Naive thymus-derived CD4-positive, alpha-beta T cell (primary cell): ENCODE measurements at regions of chr1 and their contacts with region 1.

Region 1: DNA sequence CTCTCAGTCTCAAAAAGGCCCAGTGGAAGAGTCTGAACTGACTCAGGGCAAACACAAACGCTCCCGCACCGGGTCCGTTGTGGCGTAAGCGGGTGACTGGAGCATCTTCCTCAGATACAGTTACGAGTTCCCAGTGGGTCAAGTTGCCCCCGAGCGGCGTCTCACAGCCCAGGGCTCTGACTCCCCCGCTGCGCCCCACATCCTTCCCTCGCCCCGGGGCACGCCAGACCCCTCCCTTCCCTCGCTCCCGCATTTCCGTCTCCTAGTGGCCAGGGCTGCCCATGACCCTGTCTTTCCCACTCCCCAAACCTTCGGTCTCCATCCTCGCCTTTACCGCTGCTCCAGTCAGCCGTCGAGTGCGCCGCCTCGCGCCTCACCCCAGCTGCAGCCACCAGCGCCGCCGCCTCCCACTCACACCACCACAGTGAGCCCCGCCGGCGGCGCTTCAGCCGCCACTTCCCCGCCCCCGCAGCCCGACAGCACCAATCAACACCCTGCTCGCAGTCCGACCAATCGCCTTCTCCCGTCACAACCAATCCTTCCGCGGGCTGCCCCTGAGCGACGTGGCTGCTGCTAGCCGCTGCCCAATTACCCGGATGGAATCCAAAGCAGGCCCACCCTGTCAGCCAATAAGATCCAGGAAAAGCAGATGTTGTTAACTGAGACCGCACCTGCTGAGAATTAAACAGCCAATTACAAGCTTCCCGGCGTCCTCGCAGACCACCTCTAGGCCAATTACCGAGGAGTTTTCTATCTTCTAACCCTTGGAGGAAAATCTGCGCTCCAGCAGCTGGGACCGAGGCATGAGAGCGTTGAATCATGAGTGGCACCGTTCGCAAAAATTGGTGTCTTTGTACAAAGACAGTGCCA is at the start of gene TDRKH:
- DNase-seq: peak; percentile 93 to 99 (median 99)
- ATAC-seq: peak; percentile 97
- H3K4me3 ChIP-seq: peak within 1 kb of the TSS; percentile 88
- H3K4me3 Mint-ChIP-seq: peak within 1 kb of the TSS; percentile 91 to 99 (median 97)
- H3K27ac ChIP-seq: peak within 1 kb of the TSS; percentile 60
- H3K27ac Mint-ChIP-seq: peak within 1 kb of the TSS; percentile 75 to 93 (median 89)
- H3K4me1 ChIP-seq: peaks cover 0 to 14% of the 10 kb centered on the region in 2 donors
- H3K4me1 Mint-ChIP-seq: peaks cover 6 to 38% (median 30%) of the 10 kb centered on the region in 7 donors
- H3K27me3 ChIP-seq: no peaks in the 10 kb centered on the region
- H3K27me3 Mint-ChIP-seq: peaks cover 0 to 2% (median 0%) of the 10 kb centered on the region in 5 donors
- total RNA-seq, gene TDRKH: 7.7 to 23.1 (median 17.0) TPM

Region 2: GRCh38 chr1:151459331-151460046 is 330.8 kb before region 1 on chr1 and contains the start of gene POGZ:
- CTCF ChIA-PET with region 1: interaction called, 3 read pairs
- POLR2A ChIA-PET with region 1: no interaction called
- intact Hi-C with region 1: loop called in 1 of 2 experiments (anchors 1 kb)
- DNase-seq: peak; percentile 80 to 94 (median 93)
- ATAC-seq: peak; percentile 87
- H3K4me3 ChIP-seq: peak within 1 kb of the TSS; percentile 73
- H3K4me3 Mint-ChIP-seq: peak within 1 kb of the TSS; percentile 87 to 100 (median 91)
- H3K27ac ChIP-seq: peak within 1 kb of the TSS; percentile 81
- H3K27ac Mint-ChIP-seq: peak within 1 kb of the TSS; percentile 91 to 97 (median 96)
- H3K4me1 ChIP-seq: peaks cover 8 to 12% of the 10 kb centered on the region in 2 donors
- H3K4me1 Mint-ChIP-seq: peaks cover 15 to 43% (median 34%) of the 10 kb centered on the region in 7 donors
- H3K27me3 ChIP-seq: no peaks in the 10 kb centered on the region
- H3K27me3 Mint-ChIP-seq: peaks cover 15 to 25% (median 18%) of the 10 kb centered on the region in 5 donors
- total RNA-seq, gene POGZ: 83.7 to 143 (median 112) TPM

Region 3: DNA sequence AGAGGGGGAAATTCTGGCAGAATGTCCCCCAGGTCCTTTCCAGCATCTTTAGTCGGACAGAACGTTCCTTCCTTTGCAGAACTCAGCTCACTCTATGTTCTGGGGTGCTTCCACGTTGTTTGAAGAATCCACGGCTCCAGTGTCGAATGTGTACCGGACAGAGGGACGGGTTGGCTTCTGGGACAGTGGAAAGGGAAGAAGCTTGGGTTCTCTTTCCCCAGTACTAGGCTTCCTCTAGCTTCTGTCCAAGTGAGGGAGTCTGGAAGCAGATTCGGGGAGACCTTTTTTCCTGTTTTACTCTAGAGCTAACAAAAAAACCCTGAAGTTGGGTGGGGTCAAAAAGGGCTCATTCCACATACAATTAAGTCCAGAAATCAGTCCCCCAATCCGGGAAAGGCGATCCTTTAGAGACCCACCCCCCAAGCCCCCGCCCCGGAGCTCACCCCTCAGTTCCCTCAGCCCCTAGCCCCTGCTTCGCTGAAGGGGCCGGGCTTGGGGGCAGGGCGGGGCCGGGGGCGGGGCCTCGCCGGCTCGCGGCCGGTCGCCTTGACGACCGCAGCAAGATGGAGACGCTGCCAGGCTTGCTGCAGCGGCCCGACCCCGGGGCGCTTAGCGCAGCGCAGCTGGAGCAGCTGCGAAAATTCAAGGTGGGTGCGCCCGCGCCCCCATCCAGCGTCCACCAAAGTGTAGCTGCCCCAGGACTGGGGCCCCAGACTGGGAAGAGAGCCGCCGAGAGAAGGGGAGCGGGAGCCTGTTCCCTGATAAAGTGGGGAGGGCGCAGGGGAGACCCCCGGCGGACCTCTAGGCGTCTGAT is 69.1 kb before region 1 on chr1 and contains the start of gene RIIAD1:
- CTCF ChIA-PET with region 1: no interaction called
- POLR2A ChIA-PET with region 1: no interaction called
- intact Hi-C with region 1: loop called (anchors 1 to 5 kb)
- DNase-seq: peak in 8 of 9 donors; percentile 17 to 47 (median 40)
- ATAC-seq: peak; percentile 85
- H3K4me3 ChIP-seq: peak within 1 kb of the TSS; percentile 71
- H3K4me3 Mint-ChIP-seq: peak within 1 kb of the TSS; percentile 71 to 85 (median 83)
- H3K27ac ChIP-seq: no peak within 1 kb of the TSS
- H3K27ac Mint-ChIP-seq: peak within 1 kb of the TSS in 8 of 9 donors; percentile 11 to 85 (median 36)
- H3K4me1 ChIP-seq: peaks cover 9 to 14% of the 10 kb centered on the region in 2 donors
- H3K4me1 Mint-ChIP-seq: peaks cover 17 to 41% (median 26%) of the 10 kb centered on the region in 7 donors
- H3K27me3 ChIP-seq: peaks cover 4 to 6% of the 10 kb centered on the region in 2 donors
- H3K27me3 Mint-ChIP-seq: peaks cover 54 to 88% (median 65%) of the 10 kb centered on the region in 5 donors
- total RNA-seq, gene RIIAD1: not detected

Region 4: GRCh38 chr1:151828965-151829698 is 38.8 kb after region 1 on chr1:
- CTCF ChIA-PET with region 1: interaction called, 7 read pairs
- POLR2A ChIA-PET with region 1: interaction called, 3 read pairs
- intact Hi-C with region 1: loop called in 1 of 2 experiments (anchors 2 kb)
- DNase-seq: no peak
- ATAC-seq: no peak
- H3K4me3 ChIP-seq: no peak overlapping the region
- H3K4me3 Mint-ChIP-seq: peak overlapping the region; percentile 39 to 80 (median 72)
- H3K27ac ChIP-seq: peak overlapping the region; percentile 16
- H3K27ac Mint-ChIP-seq: peak overlapping the region; percentile 3 to 91 (median 80)
- H3K4me1 ChIP-seq: peaks cover 49 to 60% of the 10 kb centered on the region in 2 donors
- H3K4me1 Mint-ChIP-seq: peaks cover 41 to 81% (median 59%) of the 10 kb centered on the region in 7 donors
- H3K27me3 ChIP-seq: no peaks in the 10 kb centered on the region
- H3K27me3 Mint-ChIP-seq: no peaks in the 10 kb centered on the region

Region 5: GRCh38 chr1:151898513-151898991 is 108.2 kb after region 1 on chr1:
- CTCF ChIA-PET with region 1: no interaction called
- POLR2A ChIA-PET with region 1: no interaction called
- intact Hi-C with region 1: loop called in 1 of 2 experiments (anchors 2 kb)
- DNase-seq: peak; percentile 16 to 88 (median 83)
- ATAC-seq: peak; percentile 89
- H3K4me3 ChIP-seq: peak overlapping the region; percentile 61
- H3K4me3 Mint-ChIP-seq: peak overlapping the region; percentile 76 to 91 (median 84)
- H3K27ac ChIP-seq: peak overlapping the region; percentile 66
- H3K27ac Mint-ChIP-seq: peak overlapping the region; percentile 85 to 100 (median 97)
- H3K4me1 ChIP-seq: peaks cover 29 to 52% of the 10 kb centered on the region in 2 donors
- H3K4me1 Mint-ChIP-seq: peaks cover 53 to 91% (median 69%) of the 10 kb centered on the region in 7 donors
- H3K27me3 ChIP-seq: no peaks in the 10 kb centered on the region
- H3K27me3 Mint-ChIP-seq: no peaks in the 10 kb centered on the region

Region 6: DNA sequence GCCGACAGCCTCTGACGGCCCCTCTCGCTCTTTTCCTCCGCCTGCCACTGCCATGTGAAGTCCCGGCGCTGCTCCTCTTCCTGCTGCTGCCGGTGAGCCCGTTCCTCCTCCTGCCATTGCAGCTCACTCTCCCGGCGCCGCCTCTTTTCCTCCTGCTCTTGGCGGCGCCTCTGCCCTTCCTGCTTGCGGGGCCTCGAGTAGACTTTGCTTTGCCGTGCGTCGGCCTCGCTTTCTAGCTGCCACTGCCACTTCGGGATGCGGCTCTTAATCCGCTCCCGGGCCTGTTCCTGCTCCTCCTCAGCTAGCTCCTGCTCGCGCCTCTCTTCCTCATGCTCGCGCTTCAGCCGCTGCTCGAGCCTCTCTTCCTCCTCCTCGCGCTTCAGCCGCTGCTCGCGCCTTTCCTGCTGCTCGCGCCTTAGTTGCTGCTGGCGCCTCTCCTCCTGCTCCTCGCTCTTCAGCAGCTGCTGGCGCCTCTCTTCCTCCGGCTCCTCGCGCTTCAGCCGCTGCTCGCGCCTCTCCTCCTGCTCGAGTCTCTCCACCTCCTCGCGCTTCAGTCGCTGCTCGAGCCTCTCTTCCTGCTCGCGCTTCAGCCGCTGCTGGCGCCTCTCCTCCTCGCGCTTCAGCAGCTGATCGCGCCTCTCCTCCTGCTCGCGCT is 320.7 kb after region 1 on chr1:
- CTCF ChIA-PET with region 1: interaction called, 10 read pairs
- POLR2A ChIA-PET with region 1: no interaction called
- intact Hi-C with region 1: no loop called
- DNase-seq: peak in 3 of 9 donors; percentile 10 to 42 (median 25)
- ATAC-seq: peak; percentile 52
- H3K4me3 ChIP-seq: peak overlapping the region; percentile 63
- H3K4me3 Mint-ChIP-seq: no peak overlapping the region
- H3K27ac ChIP-seq: no peak overlapping the region
- H3K27ac Mint-ChIP-seq: no peak overlapping the region
- H3K4me1 ChIP-seq: peaks cover 23 to 28% of the 10 kb centered on the region in 2 donors
- H3K4me1 Mint-ChIP-seq: peaks cover 0 to 12% (median 0%) of the 10 kb centered on the region in 7 donors
- H3K27me3 ChIP-seq: peaks cover 4 to 55% of the 10 kb centered on the region in 2 donors
- H3K27me3 Mint-ChIP-seq: peaks cover 3 to 28% (median 5%) of the 10 kb centered on the region in 5 donors